Tibial artery (tissue), 4 donors: ENCODE measurements at regions of chr11 and their contacts with region 1.

Region 1: DNA sequence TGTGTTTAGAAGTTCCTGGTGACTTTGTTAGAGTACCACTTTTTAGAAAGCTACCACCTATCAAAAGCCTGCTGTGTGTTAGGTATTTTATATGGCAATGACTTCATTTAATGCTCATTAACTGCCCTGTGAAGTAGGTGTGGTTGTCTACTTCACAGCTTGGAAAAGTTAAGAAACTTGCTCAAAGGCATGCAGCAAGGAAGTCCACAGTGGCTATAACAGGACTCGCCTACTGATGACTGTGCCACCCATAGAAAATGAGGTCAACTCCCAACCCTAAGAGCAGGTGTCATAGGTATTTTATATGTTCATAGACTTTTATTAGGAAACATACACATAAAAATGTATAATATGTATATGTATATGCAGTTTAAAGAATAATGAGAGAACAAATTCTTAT is 125.2 kb upstream of the PAX6 start:
- DNase-seq: no peak
- H3K4me3 ChIP-seq: no peak overlapping the region
- H3K27ac ChIP-seq: no peak overlapping the region
- H3K4me1 ChIP-seq: no peaks in the 10 kb centered on the region
- H3K27me3 ChIP-seq: peaks cover 0 to 3% of the 10 kb centered on the region in 2 donors
- CTCF ChIP-seq: no peak

Region 2: DNA sequence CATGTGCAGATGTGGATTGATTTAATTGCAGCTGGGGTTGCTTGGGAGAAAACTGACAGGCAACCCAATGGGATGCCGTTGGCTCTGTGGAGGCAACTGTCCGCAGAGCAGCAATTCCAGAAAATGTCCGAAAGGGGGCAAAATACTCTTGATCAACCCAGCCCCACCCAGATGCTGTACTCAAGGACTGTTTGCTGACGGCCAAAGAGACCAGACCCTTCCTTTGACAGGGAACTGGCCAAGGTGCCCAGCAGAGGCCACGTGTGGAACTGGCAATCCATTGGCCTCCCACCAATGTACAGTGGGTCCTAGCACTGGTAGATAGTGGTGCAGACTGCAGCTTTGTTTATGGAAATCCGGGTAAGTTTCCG is 1889.7 kb before region 1 on chr11:
- intact Hi-C with region 1: loop called (anchors 5 kb)
- DNase-seq: no peak
- H3K4me3 ChIP-seq: no peak overlapping the region
- H3K27ac ChIP-seq: no peak overlapping the region
- H3K4me1 ChIP-seq: no peaks in the 10 kb centered on the region
- H3K27me3 ChIP-seq: no peaks in the 10 kb centered on the region
- CTCF ChIP-seq: no peak